ENCODE measurements at regions of chr9 and their contacts with region 1.

Region 1: GRCh38 chr9:32350682-32351081 is 33.8 kb upstream of the ACO1 start:
- DNase-seq: no peak
- ATAC-seq: no peak
- H3K4me3 ChIP-seq: no peak overlapping the region
- H3K27ac ChIP-seq: no peak overlapping the region
- H3K4me1 ChIP-seq: no peaks in the 10 kb centered on the region
- H3K27me3 ChIP-seq: no peaks in the 10 kb centered on the region
- CTCF ChIP-seq: no peak; a peak in 1 of 6 replicates
- EP300 ChIP-seq: no peak
- POLR2A ChIP-seq: no peak
- RAD21 ChIP-seq: peak; percentile 48

Region 2: DNA sequence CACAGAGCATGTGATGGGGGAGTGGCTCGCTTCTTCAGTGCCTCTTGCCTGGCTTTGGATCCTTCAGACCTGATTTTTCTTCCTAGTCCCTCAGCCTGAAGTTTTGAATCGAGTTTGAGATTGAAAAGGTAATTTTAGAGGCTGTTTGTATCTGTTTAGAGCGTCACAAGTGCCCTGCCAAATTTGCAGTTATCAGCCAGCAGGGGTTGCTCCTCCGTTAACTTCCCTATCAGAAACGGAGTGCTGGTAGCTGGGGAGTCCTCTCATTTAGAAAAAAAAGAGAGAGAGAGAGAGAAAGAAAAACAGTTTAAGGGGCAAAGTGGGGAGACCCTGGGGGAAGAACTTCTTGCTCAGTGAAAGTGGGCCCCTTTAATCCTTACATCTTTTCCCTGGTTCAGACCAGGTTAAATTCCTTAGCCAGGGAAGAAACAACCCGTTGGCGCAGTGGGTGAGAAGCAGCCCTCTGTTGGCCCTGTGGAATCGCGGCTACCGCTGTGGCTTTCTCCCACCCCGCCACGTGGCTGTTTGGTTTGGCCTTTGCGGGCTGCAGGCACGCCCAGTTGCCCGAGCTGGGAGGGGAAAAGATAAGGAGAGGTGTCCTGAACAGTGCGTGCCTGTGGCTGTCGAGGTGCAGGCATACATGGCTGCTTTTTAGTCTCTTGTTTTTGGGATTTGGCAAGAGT is 543.0 kb before region 1 on chr9:
- CTCF ChIA-PET with region 1: no interaction called
- POLR2A ChIA-PET with region 1: no interaction called
- RAD21 ChIA-PET with region 1: no interaction called
- SMC1A ChIA-PET with region 1: no interaction called
- in situ Hi-C with region 1: no loop called
- intact Hi-C with region 1: loop called (anchors 10 kb)
- DNase-seq: no peak
- ATAC-seq: peak; percentile 48; the same call in 2 of the 3 replicates
- H3K4me3 ChIP-seq: no peak overlapping the region
- H3K27ac ChIP-seq: no peak overlapping the region
- H3K4me1 ChIP-seq: no peaks in the 10 kb centered on the region
- H3K27me3 ChIP-seq: no peaks in the 10 kb centered on the region
- CTCF ChIP-seq: 0 out of 6 replicates have a peak, but pooled peaks of 2 of the 3 experiments have one; percentile 7 to 15
- EP300 ChIP-seq: no peak
- POLR2A ChIP-seq: no peak
- RAD21 ChIP-seq: peak; percentile 28; the same call in 1 of the 2 replicates